Motor neuron (in vitro differentiated cells): ENCODE measurements at regions of chr13 and their contacts with region 1.

Region 1: GRCh38 chr13:20902438-20903163 is at the start of gene XPO4:
- ATAC-seq: peak; percentile 85 to 94 (median 92)
- H3K4me3 ChIP-seq: peak within 1 kb of the TSS; percentile 55 to 97 (median 81)
- H3K27ac ChIP-seq: peak within 1 kb of the TSS; percentile 93 to 94
- H3K4me1 ChIP-seq: peaks cover 4 to 15% of the 10 kb centered on the region in 2 donors
- total RNA-seq, gene XPO4: 11.4 to 32.2 (median 15.3) TPM

Region 2: GRCh38 chr13:20182231-20182846 is 720.3 kb before region 1 on chr13:
- in situ Hi-C with region 1: loop called in 5 of 9 experiments (anchors 25 kb)
- ATAC-seq: peak; percentile 75 to 97 (median 92)
- H3K4me3 ChIP-seq: no peak overlapping the region
- H3K27ac ChIP-seq: no peak overlapping the region
- H3K4me1 ChIP-seq: no peaks in the 10 kb centered on the region

Region 3: DNA sequence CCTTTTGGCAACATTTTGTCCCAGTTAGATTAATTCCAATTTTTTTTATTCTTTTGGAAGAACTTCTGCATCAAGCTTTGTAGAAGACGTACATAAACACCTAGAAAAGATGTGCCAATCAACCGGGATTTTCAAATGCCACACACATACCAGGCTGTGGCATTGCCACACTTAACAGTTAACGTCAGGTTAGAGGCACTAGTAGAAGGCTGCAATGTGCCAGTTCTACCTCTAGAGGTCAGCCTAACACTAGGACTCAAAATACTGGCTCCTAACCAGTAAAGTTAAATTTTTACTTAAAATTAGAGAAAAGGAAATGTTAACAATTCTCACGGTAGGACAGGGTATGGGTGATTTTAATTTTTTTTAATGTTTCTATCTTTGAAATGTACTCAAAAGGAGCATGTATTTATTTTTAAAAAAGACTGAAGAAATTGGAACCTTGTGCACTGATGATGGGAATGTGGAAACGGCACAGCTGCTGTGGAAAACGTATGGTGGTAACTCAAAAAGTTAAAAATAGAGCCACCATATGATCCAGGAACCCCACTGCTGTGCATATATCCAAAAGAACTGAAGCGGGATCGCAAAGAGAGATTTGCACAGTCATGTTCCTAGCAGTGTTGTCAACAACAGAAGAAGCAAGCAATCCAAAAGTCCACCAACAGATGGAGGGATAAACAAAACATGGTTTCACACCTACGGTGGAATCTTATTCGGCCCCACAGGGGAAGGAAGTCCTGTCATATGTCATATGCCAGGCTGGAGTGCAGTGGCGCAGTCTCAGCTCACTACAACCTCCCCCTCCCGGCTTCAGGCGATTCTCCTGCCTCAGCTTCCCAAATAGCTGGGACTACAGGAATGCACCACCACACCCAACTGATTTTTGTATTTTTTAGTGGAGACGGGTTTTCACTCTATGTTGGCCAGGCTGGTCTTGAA is 407.2 kb before region 1 on chr13:
- in situ Hi-C with region 1: loop called in 5 of 9 experiments (anchors 25 kb)
- ATAC-seq: peak in 7 of 8 experiments; percentile 43 to 86 (median 70)
- H3K4me3 ChIP-seq: no peak overlapping the region
- H3K27ac ChIP-seq: no peak overlapping the region
- H3K4me1 ChIP-seq: no peaks in the 10 kb centered on the region

Region 4: DNA sequence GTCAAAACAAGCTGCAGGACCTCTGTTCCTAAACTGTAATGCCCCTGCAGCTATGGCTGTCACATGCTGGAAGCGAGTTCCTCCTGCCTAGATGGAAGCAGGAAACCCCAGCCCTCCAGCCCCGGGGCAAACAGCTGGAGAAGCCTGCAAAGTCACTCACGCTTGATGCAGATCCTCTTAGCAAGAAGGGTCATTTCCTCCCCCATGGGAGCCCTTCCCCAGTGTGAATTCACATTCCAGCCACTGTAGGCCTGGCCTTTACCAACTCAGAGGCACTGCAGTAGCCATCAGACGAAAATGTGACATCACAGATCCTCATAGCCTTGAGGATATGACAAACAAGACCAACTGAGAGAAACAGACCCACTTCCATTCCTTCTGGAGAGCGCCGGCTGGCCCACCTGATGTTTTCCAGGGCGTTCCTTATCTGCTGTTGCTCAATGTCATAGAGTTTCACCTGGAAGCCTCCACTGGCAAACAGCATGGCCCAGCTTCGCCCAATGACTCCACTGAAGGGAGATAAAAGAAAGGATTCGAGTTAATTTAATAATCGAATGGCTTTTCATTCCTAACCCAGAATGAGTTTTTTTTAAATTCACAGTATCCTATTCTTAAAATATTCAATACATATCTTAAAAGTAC is 390.4 kb before region 1 on chr13:
- in situ Hi-C with region 1: loop called in 1 of 9 experiments (anchors 25 kb)
- ATAC-seq: peak in 3 of 8 experiments; percentile 56 to 79 (median 63)
- H3K4me3 ChIP-seq: no peak overlapping the region
- H3K27ac ChIP-seq: no peak overlapping the region
- H3K4me1 ChIP-seq: no peaks in the 10 kb centered on the region

Region 5: DNA sequence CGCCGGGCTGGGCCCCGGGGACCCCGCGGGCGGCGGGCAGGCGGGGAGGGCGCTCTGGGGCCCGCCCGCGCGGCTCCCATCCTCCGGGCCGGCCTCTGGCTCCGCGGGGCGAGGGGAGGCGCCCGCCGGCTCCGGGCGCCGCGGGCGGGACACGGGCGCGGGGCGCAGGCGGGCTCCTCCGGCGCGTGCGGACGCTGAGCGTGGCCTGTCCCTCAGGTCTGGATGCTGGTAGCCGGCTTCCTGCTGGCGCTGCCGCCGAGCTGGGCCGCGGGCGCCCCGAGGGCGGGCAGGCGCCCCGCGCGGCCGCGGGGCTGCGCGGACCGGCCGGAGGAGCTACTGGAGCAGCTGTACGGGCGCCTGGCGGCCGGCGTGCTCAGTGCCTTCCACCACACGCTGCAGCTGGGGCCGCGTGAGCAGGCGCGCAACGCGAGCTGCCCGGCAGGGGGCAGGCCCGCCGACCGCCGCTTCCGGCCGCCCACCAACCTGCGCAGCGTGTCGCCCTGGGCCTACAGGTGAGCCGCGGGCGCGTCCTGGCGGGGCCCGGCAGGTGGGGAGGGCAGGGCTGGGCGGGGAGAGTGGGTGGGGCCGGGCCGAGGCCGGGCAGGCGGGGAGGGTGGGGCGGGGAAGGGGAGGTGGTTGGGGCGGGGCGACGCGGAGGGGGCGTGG is 198.7 kb before region 1 on chr13:
- in situ Hi-C with region 1: loop called in 3 of 9 experiments (anchors 25 kb)
- ATAC-seq: peak; percentile 83 to 94 (median 88)
- H3K4me3 ChIP-seq: peak overlapping the region; percentile 58 to 96 (median 64)
- H3K27ac ChIP-seq: peak overlapping the region; percentile 73 to 76
- H3K4me1 ChIP-seq: peaks cover 12 to 13% of the 10 kb centered on the region in 2 donors